ENCODE measurements at regions of chr11 and their contacts with region 1.

Region 1: GRCh38 chr11:12496171-12497025 is 119.0 kb downstream of the PARVA start:
- DNase-seq: no peak
- H3K4me3 ChIP-seq: no peak overlapping the region
- CTCF ChIP-seq: peak; percentile 16

Region 2: GRCh38 chr11:12485328-12485727 is 11.1 kb before region 1 on chr11:
- CTCF ChIA-PET with region 1: interaction called, 10 read pairs
- POLR2A ChIA-PET with region 1: no interaction called
- DNase-seq: no peak
- H3K4me3 ChIP-seq: no peak overlapping the region
- CTCF ChIP-seq: peak; percentile 2

Measured in AG04449 (cell line).